MCF 10A (cell line): ENCODE measurements at regions of chr4 and their contacts with region 1.

Region 1: GRCh38 chr4:52545099-52546069 is 113.7 kb downstream of the USP46 start:
- DNase-seq: peak; percentile 78
- H3K4me3 Mint-ChIP-seq: no peak overlapping the region
- H3K27ac Mint-ChIP-seq: no peak overlapping the region
- H3K4me1 Mint-ChIP-seq: no peaks in the 10 kb centered on the region
- H3K27me3 Mint-ChIP-seq: no peaks in the 10 kb centered on the region
- CTCF ChIP-seq: peak; percentile 89

Region 2: DNA sequence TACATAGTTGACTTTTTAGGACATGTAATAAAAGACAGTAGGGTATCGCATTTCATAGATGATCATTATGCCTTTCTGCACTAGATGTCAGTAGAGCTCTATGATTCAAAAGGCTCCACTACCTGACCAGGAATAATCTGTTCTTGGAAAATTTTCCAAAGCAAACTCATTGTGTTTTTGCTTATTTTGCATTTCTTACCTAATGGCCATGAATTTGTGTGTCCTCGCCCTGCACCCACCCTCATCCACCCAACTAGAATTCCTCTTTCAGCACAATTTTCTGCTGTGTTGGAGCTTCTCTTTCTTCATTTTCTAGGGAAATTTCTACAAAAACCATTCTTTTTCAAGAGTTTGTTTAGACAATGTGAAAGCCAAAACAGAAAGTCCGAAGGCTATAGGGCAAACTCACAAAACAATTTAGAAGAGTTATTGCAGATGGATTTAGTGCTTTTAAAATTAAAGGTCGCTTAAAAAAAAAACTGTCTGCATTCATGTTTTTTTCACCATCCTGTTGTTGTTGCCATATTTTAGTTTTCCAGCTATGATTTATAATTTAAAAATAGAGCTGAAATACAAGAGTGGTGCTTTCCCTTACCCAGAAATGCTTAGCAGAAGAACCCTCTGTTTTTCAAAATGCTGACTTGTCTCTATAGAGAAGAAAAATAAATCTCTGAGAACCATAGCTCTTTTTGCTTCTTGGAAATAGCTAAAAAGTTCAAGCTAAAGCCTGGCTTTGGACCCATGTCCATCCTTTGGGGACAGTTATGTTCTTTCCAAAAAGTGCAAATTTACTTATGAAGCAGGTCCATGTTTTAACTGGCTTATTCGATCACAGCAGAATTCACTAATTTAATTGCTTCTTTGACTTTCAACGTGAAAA is 310.6 kb before region 1 on chr4:
- CTCF ChIA-PET with region 1: interaction called, 27 read pairs
- POLR2A ChIA-PET with region 1: interaction called, 4 read pairs
- intact Hi-C with region 1: loop called (anchors 10 kb)
- DNase-seq: peak; percentile 69
- H3K4me3 Mint-ChIP-seq: no peak overlapping the region
- H3K27ac Mint-ChIP-seq: no peak overlapping the region
- H3K4me1 Mint-ChIP-seq: no peaks in the 10 kb centered on the region
- H3K27me3 Mint-ChIP-seq: peaks cover 12% of the 10 kb centered on the region
- CTCF ChIP-seq: peak; percentile 69

Region 3: GRCh38 chr4:52659001-52659721 is 113.8 kb after region 1 on chr4 and contains the start of gene USP46:
- CTCF ChIA-PET with region 1: interaction called, 13 read pairs
- POLR2A ChIA-PET with region 1: interaction called, 6 read pairs
- intact Hi-C with region 1: loop called (anchors 2 kb)
- DNase-seq: peak; percentile 76
- H3K4me3 Mint-ChIP-seq: peak within 1 kb of the TSS; percentile 77
- H3K27ac Mint-ChIP-seq: peak within 1 kb of the TSS; percentile 26
- H3K4me1 Mint-ChIP-seq: peaks cover 34% of the 10 kb centered on the region
- H3K27me3 Mint-ChIP-seq: no peaks in the 10 kb centered on the region
- CTCF ChIP-seq: no peak
- total RNA-seq, gene USP46: 16.8 and 23.0 TPM in 2 replicates

Region 4: GRCh38 chr4:52728691-52729240 is 183.4 kb after region 1 on chr4:
- CTCF ChIA-PET with region 1: interaction called, 13 read pairs
- POLR2A ChIA-PET with region 1: no interaction called
- intact Hi-C with region 1: no loop called
- DNase-seq: no peak
- H3K4me3 Mint-ChIP-seq: no peak overlapping the region
- H3K27ac Mint-ChIP-seq: no peak overlapping the region
- H3K4me1 Mint-ChIP-seq: no peaks in the 10 kb centered on the region
- H3K27me3 Mint-ChIP-seq: no peaks in the 10 kb centered on the region
- CTCF ChIP-seq: no peak

Region 5: GRCh38 chr4:52976523-52977230 is 431.3 kb after region 1 on chr4:
- CTCF ChIA-PET with region 1: interaction called, 244 read pairs
- POLR2A ChIA-PET with region 1: interaction called, 5 read pairs
- intact Hi-C with region 1: no loop called
- DNase-seq: no peak
- H3K4me3 Mint-ChIP-seq: no peak overlapping the region
- H3K27ac Mint-ChIP-seq: no peak overlapping the region
- H3K4me1 Mint-ChIP-seq: no peaks in the 10 kb centered on the region
- H3K27me3 Mint-ChIP-seq: no peaks in the 10 kb centered on the region
- CTCF ChIP-seq: no peak